Breast epithelium (tissue), 4 donors: ENCODE measurements at regions of chr15 and their contacts with region 1.

Region 1: GRCh38 chr15:100053474-100054121 is 288.2 kb downstream of the ADAMTS17 start:
- DNase-seq: no peak
- H3K4me3 ChIP-seq: no peak overlapping the region
- H3K27ac ChIP-seq: no peak overlapping the region
- H3K4me1 ChIP-seq: no peaks in the 10 kb centered on the region
- H3K27me3 ChIP-seq: no peaks in the 10 kb centered on the region
- CTCF ChIP-seq: no peak
- POLR2A ChIP-seq: no peak

Region 2: DNA sequence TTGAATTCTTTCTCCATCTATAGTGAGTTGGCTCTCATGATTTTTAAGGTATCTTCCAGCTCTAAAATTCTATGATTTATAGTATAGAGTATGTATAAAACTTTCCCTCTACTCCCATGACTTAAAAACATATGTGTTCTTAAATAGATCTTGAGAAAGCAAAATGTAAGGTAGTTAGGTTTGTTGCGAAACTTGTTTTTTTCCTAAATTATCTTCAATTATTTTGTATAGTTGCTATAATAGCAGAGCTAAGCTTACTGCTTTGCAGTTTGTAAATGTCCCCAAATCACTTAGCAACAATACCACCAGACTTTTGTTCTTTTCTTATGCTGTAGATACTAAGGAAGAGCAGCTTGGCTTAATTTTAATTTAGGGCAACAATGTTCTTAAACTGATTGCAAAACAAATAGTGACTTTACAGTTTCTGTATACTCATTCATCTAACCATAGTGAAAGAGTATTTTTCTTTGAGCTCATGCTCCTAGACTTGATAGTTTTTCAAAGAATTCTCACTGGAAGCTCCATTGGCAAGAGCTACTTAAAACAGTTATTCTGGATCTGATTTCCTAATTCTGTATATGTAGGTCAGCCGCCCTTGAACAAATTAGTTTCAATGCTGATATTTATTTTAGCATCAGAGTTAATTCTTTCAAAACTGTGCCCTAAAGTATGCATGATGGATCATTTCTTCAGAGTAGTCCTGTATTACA is 381.5 kb before region 1 on chr15:
- intact Hi-C with region 1: loop called (anchors 5 kb)
- DNase-seq: no peak
- H3K4me3 ChIP-seq: no peak overlapping the region
- H3K27ac ChIP-seq: no peak overlapping the region
- H3K4me1 ChIP-seq: no peaks in the 10 kb centered on the region
- H3K27me3 ChIP-seq: no peaks in the 10 kb centered on the region
- CTCF ChIP-seq: no peak
- POLR2A ChIP-seq: no peak

Region 3: DNA sequence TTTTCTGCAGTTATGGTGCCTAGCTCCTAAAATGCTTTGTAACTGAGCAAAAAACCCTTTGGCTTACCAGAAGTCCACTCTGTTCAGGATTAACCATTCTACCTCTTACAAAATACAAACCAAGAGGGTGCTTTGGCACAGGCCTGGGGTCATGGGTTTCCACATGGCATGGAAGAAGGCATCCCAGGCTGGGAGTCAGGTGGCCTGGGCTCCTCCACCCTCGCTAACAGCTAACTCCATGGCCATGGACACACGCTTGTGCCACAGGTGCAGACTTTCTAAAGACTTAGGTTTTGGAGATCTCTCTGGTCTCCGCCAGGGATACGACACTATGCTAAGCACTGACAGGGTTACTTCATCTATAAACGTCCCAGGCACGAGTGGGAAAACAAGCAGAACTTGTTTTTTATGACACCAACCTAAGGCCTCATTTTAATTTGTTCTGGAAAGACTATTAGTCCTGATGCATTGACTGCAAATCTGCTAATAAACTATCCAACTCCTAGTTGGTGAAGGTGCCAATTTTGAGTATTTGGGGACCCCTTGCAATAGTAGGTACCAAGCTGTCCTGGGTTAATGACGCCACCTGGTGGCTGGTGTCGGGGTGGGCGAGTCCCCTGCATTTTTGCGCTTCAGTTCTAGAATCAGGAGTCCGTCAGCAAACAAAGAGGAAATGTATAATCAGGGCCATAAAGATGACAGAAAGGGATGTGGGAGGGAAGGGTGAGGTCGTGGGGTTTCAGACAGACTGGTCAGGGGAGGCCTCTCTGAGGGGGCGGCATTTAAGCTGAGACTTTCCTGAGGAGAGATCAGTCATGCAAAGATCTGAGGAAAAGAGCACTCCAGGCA is 815.8 kb after region 1 on chr15:
- intact Hi-C with region 1: loop called (anchors 10 kb)
- DNase-seq: no peak
- H3K4me3 ChIP-seq: no peak overlapping the region
- H3K27ac ChIP-seq: no peak overlapping the region
- H3K4me1 ChIP-seq: no peaks in the 10 kb centered on the region
- H3K27me3 ChIP-seq: no peaks in the 10 kb centered on the region
- CTCF ChIP-seq: no peak
- POLR2A ChIP-seq: no peak